ENCODE measurements at regions of chr2 and their contacts with region 1.

Region 1: GRCh38 chr2:121319953-121320352 is 35.0 kb upstream of the TFCP2L1 start:
- DNase-seq: no peak
- ATAC-seq: no peak
- H3K4me3 ChIP-seq: no peak overlapping the region
- H3K27ac ChIP-seq: no peak overlapping the region
- H3K4me1 ChIP-seq: no peaks in the 10 kb centered on the region
- H3K27me3 ChIP-seq: no peaks in the 10 kb centered on the region
- CTCF ChIP-seq: no peak
- POLR2A ChIP-seq: no peak
- RAD21 ChIP-seq: no peak

Region 2: GRCh38 chr2:121095257-121096080 is 224.5 kb before region 1 on chr2:
- CTCF ChIA-PET with region 1: interaction called, 10 read pairs
- POLR2A ChIA-PET with region 1: no interaction called
- RAD21 ChIA-PET with region 1: interaction called in 1 of 2 experiments, 6 read pairs
- intact Hi-C with region 1: loop called (anchors 1 kb)
- DNase-seq: peak; percentile 72
- ATAC-seq: peak; percentile 97
- H3K4me3 ChIP-seq: no peak overlapping the region
- H3K27ac ChIP-seq: no peak overlapping the region
- H3K4me1 ChIP-seq: peaks cover 0 to 9% of the 10 kb centered on the region in 2 experiments; a peak in 2 of 4 replicates
- H3K27me3 ChIP-seq: no peaks in the 10 kb centered on the region
- CTCF ChIP-seq: peak; percentile 82 to 87 (median 83)
- POLR2A ChIP-seq: no peak
- RAD21 ChIP-seq: peak; percentile 95

Region 3: GRCh38 chr2:121689356-121689755 is 369.4 kb after region 1 on chr2:
- CTCF ChIA-PET with region 1: no interaction called
- POLR2A ChIA-PET with region 1: no interaction called
- RAD21 ChIA-PET with region 1: no interaction called
- intact Hi-C with region 1: no loop called
- DNase-seq: no peak
- ATAC-seq: peak; percentile 80
- H3K4me3 ChIP-seq: no peak overlapping the region
- H3K27ac ChIP-seq: no peak overlapping the region
- H3K4me1 ChIP-seq: peaks cover 2 to 3% of the 10 kb centered on the region in 2 experiments; a peak in 2 of 4 replicates
- H3K27me3 ChIP-seq: no peaks in the 10 kb centered on the region
- CTCF ChIP-seq: peak; percentile 34 to 45 (median 37); a peak in 5 of 6 replicates
- POLR2A ChIP-seq: no peak
- RAD21 ChIP-seq: peak; percentile 44